ENCODE measurements at regions of chr14 and their contacts with region 1.

Region 1: GRCh38 chr14:34322940-34323418 is 139.1 kb downstream of the SPTSSA start:
- DNase-seq: peak; percentile 50 to 61 (median 60)
- H3K4me3 ChIP-seq: no peak overlapping the region
- H3K4me3 Mint-ChIP-seq: no peak overlapping the region
- H3K27ac ChIP-seq: no peak overlapping the region
- H3K27ac Mint-ChIP-seq: no peak overlapping the region
- H3K4me1 ChIP-seq: no peaks in the 10 kb centered on the region
- H3K4me1 Mint-ChIP-seq: peaks cover 0 to 3% (median under 1%) of the 10 kb centered on the region in 4 donors
- H3K27me3 ChIP-seq: no peaks in the 10 kb centered on the region
- H3K27me3 Mint-ChIP-seq: peaks cover 2 to 9% of the 10 kb centered on the region in 2 donors

Region 2: GRCh38 chr14:34300882-34301734 is 21.9 kb before region 1 on chr14:
- CTCF ChIA-PET with region 1: interaction called, 16 read pairs
- POLR2A ChIA-PET with region 1: no interaction called
- intact Hi-C with region 1: no loop called
- DNase-seq: peak in 4 of 5 donors; percentile 19 to 29 (median 22)
- H3K4me3 ChIP-seq: no peak overlapping the region
- H3K4me3 Mint-ChIP-seq: no peak overlapping the region
- H3K27ac ChIP-seq: no peak overlapping the region
- H3K27ac Mint-ChIP-seq: peak overlapping the region in 1 of 7 donors; percentile 29
- H3K4me1 ChIP-seq: no peaks in the 10 kb centered on the region
- H3K4me1 Mint-ChIP-seq: no peaks in the 10 kb centered on the region
- H3K27me3 ChIP-seq: no peaks in the 10 kb centered on the region
- H3K27me3 Mint-ChIP-seq: peaks cover 9 to 13% of the 10 kb centered on the region in 2 donors

Region 3: DNA sequence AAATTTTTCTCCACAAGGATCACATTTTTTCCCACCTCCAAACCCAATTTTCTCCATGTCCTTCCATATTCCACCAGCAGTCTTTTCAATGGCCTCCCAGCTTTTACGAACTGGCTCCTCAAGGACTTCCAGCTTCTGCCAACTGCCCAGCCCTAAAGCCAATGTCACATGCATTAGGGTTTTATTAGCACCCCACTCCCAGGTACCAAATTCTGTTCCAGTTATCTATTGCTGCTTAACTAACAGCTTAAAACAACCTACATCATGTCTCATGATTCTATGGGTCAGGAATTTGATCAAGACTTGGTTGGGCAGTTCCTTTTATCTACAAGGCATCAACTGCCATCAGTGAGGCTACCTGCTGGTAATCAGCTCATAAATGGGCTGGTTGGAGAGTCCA is 12.3 kb before region 1 on chr14:
- CTCF ChIA-PET with region 1: interaction called, 55 read pairs
- POLR2A ChIA-PET with region 1: no interaction called
- intact Hi-C with region 1: no loop called
- DNase-seq: no peak
- H3K4me3 ChIP-seq: no peak overlapping the region
- H3K4me3 Mint-ChIP-seq: no peak overlapping the region
- H3K27ac ChIP-seq: no peak overlapping the region
- H3K27ac Mint-ChIP-seq: no peak overlapping the region
- H3K4me1 ChIP-seq: no peaks in the 10 kb centered on the region
- H3K4me1 Mint-ChIP-seq: no peaks in the 10 kb centered on the region
- H3K27me3 ChIP-seq: no peaks in the 10 kb centered on the region
- H3K27me3 Mint-ChIP-seq: peaks cover 21 to 24% of the 10 kb centered on the region in 2 donors

Measured in CD4-positive, alpha-beta memory T cell (primary cell).